Right lobe of liver (tissue), 6 donors: ENCODE measurements at regions of chr12 and their contacts with region 1.

Region 1: DNA sequence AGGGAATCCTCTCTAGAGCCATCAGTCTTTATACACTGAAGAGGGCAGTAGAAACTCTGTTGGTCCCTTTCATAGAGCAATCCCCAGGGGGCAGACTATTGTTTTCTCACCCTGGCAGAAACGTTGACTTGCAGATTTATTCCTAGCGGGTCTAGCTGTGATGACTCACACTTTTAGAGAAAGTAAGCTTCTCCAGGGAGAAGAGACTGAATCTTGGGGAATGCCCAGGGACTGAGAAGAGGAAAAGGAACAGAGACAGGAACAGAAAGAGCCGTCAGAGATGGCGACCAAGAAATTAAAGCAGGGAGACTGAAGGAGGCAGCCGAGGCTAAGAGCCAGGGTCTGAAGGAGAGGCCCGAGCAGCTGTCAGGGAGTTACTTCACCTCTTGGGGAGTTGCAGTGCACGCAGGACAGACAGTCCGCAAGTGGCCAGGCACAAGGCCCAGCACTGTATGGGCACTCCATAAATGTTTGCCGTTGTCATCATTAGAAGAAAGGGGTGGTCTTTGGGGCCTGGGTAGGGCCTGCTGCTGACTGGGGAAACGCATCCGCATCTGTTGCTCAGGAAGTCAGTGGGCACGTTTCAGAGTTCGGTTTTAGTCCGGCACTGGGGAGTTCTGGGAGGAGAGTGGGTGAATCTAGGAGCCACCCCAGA is 13.0 kb downstream of the PLEKHG6 start:
- DNase-seq: peak in 1 of 3 donors; percentile 49
- ATAC-seq: peak; percentile 58 to 73 (median 64)
- H3K4me3 ChIP-seq: no peak overlapping the region
- H3K27ac ChIP-seq: peak overlapping the region; percentile 29 to 64 (median 54)
- H3K4me1 ChIP-seq: peaks cover 3 to 43% (median 20%) of the 10 kb centered on the region in 4 donors
- H3K27me3 ChIP-seq: no peaks in the 10 kb centered on the region
- CTCF ChIP-seq: peak; percentile 48 to 52 (median 51)
- POLR2A ChIP-seq: no peak

Region 2: GRCh38 chr12:6226002-6226678 is 97.3 kb before region 1 on chr12:
- intact Hi-C with region 1: no loop called
- DNase-seq: peak; percentile 38 to 80 (median 74)
- ATAC-seq: peak; percentile 65 to 84 (median 78)
- H3K4me3 ChIP-seq: peak overlapping the region in 2 of 3 donors; percentile 25 to 32
- H3K27ac ChIP-seq: peak overlapping the region; percentile 30 to 85 (median 79)
- H3K4me1 ChIP-seq: peaks cover 0 to 20% (median 2%) of the 10 kb centered on the region in 4 donors
- H3K27me3 ChIP-seq: no peaks in the 10 kb centered on the region
- CTCF ChIP-seq: no peak
- POLR2A ChIP-seq: no peak

Region 3: DNA sequence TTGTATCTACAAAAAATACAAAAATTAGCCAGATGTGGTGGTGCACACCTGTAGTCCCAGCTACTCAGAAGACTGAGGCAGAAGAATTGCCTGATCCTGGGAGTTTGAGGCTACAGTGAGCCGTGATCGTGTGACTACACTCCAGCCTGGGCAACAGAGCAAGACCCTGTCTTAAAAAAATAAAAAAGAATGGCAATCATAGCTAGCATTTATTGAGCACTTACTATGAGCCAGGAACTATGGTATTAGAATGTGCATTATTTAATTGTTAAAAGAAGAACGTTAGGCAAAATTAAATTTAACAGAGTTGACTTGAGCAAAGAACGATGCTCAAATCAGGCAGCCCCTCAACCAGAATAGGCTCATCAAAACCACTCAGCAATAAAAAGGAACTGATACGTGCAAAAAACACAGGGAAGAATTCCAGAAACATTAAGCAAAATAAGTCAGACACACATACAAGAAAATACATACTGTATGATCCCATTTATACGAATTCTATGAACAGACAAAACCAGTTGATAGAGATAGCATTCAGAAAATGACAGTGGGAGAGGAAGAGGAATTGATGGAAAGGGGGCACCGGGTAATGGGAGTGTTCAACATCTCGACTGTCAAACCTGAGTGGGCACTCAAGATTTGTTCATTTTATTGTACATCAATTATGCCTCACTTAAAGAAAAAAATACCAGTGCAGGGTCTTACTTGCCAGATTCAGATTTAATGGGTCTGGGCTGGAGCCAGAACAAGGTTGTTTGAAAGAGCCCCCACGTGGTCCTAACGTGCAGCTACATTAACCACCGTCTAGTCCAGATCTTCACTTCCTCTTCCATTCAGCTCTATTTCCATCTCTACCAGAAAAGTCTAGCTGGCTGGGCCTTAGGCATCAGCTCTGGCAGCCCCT is 43.9 kb after region 1 on chr12:
- intact Hi-C with region 1: no loop called
- DNase-seq: no peak
- ATAC-seq: peak in 1 of 4 donors; percentile 4
- H3K4me3 ChIP-seq: no peak overlapping the region
- H3K27ac ChIP-seq: no peak overlapping the region
- H3K4me1 ChIP-seq: peaks cover 0 to 27% (median 9%) of the 10 kb centered on the region in 4 donors
- H3K27me3 ChIP-seq: no peaks in the 10 kb centered on the region
- CTCF ChIP-seq: peak in 3 of 4 donors; percentile 6 to 26 (median 19)
- POLR2A ChIP-seq: no peak

Region 4: GRCh38 chr12:6451348-6452244 is 128.1 kb after region 1 on chr12 and contains the start of gene TAPBPL:
- intact Hi-C with region 1: loop called in 1 of 2 experiments (anchors 10 kb)
- DNase-seq: peak; percentile 82 to 93 (median 90)
- ATAC-seq: peak; percentile 89 to 92 (median 90)
- H3K4me3 ChIP-seq: peak within 1 kb of the TSS; percentile 79 to 92 (median 80)
- H3K27ac ChIP-seq: peak within 1 kb of the TSS; percentile 94 to 96 (median 96)
- H3K4me1 ChIP-seq: peaks cover 0 to 13% (median 6%) of the 10 kb centered on the region in 4 donors
- H3K27me3 ChIP-seq: no peaks in the 10 kb centered on the region
- CTCF ChIP-seq: no peak
- POLR2A ChIP-seq: peak; percentile 74
- total RNA-seq, gene TAPBPL: 13.8 to 29.3 (median 21.4) TPM